Dorsolateral prefrontal cortex (tissue), 120 donors: ENCODE measurements at regions of chr10 and their contacts with region 1.

Region 1: DNA sequence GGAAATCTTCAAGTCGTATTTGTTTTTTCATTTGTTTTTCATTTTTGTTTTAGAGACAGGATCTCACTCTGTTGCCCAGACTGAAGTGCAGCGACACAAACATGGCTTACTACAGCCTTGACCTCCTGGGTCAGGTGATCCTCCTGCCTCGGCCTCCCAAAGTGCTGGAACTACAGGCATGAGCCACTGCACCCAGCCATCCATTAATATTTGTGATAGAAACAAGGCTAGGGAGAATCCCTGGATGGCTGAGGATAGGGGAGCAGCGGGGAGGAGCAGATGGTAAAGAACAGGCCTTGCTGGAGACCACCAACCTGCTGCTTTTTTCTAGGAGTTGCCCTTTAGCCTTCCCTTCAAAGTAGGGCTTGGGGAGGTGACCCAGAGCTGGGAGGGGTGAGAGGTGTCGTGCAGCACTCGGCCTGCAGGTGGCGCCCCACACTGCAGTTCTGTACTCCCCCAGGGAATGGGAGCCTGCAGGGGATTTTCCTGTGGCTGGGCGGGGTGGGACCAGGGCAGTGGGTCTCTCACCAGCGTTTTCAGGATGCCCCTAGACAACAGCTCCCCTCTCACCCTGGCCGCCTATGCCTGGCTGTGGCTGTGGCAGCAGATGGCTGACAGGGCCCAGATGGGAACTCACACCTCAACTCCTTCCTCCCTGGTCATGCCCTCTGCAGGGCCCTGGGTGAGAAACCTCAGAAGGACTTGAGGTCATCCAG is 12.6 kb upstream of the CDH23 start:
- DNase-seq: peak; percentile 65 to 88 (median 81)
- H3K4me3 ChIP-seq: no peak overlapping the region
- H3K27ac ChIP-seq: peak overlapping the region in 1 of 59 donors; percentile 49
- H3K27me3 ChIP-seq: no peaks in the 10 kb centered on the region
- CTCF ChIP-seq: peak; percentile 73 to 98 (median 94)

Region 2: DNA sequence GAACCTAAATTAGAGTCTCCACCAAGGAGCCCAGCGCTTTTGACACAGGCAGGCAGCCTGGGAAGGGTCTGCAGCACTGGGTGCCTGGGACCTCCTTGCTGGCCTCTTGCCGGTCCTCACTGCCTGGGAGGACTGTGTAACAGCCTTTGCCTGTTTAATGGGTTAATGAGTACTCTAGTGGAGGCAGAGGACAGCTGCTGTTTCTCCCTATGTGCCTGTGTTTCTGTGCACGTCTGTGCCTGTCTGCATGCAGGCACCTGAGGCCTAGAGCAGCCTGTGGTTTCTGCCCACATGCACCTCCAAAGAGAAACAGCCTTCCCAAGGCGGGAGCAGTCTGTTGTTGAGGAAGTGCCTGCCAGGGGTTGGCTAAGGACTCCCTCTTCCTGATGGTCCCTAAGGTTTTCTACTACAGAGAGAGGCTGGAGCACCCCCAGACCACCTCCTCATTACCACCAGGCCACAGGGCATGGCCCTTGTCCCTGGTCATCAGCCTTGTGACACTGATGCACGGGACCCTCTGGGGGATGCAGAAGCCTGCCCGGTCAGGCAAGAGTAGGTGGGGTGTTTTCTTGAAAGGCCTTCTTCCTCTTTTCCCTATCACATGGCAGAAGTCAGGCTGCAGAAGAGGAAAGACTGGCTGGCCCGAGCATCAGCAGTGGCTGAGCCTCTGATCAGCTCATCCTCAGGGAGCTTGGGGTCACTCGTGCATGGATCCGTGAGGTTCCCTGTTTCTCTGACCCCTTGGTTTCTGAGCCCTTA is 50.8 kb before region 1 on chr10:
- intact Hi-C with region 1: no loop called
- DNase-seq: no peak
- H3K4me3 ChIP-seq: no peak overlapping the region
- H3K27ac ChIP-seq: peak overlapping the region in 1 of 59 donors; percentile 46
- H3K27me3 ChIP-seq: no peaks in the 10 kb centered on the region
- CTCF ChIP-seq: no peak

Region 3: DNA sequence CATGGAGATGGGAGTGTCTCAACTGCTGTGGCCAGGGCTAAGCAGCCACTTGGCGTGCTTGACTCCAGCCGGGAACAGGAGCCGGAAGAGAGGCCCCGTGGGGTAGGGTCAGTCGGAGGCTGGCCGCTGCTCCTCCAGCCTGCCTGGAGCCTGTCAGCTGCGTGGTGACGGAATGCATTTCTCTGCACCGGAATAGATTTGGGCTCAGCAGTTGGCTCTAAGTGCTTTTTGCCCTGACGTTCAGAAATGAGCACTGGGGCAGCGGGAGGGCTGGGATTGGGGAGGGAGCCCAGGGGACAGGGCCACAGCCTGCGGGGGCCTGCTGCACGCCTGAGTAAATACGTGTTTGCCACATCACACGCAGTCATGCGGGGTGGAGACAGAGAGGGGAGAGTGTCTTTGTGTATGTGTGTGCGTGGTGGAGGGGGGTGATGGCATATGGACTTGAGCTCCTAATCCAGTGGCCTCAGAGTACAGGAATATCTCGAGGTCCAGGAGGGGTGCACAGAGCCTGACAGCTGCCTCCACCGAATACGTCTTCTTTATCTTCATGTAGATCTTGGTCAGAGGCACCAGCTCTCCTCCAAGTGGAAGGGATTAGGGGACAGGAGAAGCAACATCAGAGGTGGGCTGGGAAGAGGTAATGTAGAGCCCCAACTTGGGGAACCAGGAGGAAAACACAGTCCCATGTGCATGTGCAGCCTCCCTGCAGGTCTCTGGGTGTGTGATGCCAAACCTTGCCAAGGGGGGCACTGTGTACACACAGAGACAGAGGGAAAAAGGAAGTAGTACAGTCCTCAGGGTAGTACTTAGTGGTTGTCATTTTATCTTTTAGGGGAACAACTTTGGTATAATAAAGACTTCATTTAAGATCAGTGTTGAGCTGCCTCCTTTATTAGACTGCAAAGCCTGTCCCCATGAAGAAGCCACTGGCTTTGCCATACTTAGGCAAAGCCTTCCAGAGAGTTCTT is 164.0 kb after region 1 on chr10:
- intact Hi-C with region 1: no loop called
- DNase-seq: no peak
- H3K4me3 ChIP-seq: no peak overlapping the region
- H3K27ac ChIP-seq: peak overlapping the region in 1 of 59 donors; percentile 13
- H3K27me3 ChIP-seq: no peaks in the 10 kb centered on the region
- CTCF ChIP-seq: peak in 6 of 56 donors; percentile 8 to 17 (median 12)

Region 4: GRCh38 chr10:71569775-71570588 is 185.9 kb after region 1 on chr10:
- intact Hi-C with region 1: loop called (anchors 5 kb)
- DNase-seq: peak in 9 of 10 donors; percentile 52 to 83 (median 74)
- H3K4me3 ChIP-seq: no peak overlapping the region
- H3K27ac ChIP-seq: peak overlapping the region in 1 of 59 donors; percentile 18
- H3K27me3 ChIP-seq: no peaks in the 10 kb centered on the region
- CTCF ChIP-seq: peak; percentile 75 to 94 (median 87)

Region 5: DNA sequence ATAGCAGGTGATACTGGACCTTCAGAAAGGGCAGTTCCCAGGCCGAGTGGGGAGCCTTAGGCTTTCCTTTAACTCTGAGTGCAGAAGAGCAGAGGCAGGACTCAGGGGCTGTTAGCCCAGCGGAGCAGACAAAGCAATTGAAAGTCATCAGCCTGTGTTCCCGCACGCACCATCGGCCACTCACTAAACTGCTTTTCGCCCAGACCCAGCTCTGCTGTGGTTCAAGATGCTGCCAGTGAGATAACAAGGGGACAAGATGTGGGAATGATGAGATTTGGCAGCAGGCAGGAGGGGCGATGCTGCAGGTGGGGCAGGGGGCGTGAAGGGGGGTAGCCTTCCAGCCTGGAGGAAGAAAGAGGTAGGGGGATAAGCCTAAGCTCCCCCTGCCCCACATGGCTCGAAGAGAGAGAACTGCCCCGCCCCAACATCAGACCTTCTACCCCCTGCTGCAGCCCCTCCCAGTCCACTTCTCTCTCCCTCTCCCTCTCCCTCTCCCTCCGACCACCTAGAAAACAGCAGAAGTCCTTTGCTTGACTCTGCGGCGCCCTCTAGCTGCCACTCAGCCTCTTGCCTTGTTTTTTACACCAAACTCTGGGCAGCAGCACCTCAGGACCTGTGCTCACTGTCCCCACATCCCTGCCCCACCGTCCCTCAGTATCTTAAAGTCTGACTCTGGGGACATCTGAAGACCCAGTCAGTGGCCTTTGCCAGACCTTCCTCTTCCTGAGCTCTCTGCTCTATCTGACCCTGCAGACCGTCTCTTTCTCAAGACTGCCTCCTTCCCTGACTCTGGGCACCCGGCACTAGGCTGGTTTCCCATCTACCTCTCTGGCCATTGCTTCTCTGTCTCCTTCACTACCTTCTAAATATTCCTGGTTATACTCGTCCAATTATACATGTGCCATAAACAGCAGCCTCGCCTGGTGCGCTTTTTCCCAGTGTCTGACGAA is 225.0 kb after region 1 on chr10:
- intact Hi-C with region 1: loop called (anchors 2 to 5 kb)
- DNase-seq: peak; percentile 82 to 94 (median 86)
- H3K4me3 ChIP-seq: peak overlapping the region in 1 of 59 donors; percentile 0
- H3K27ac ChIP-seq: peak overlapping the region in 5 of 59 donors; percentile 3 to 75 (median 32)
- H3K27me3 ChIP-seq: no peaks in the 10 kb centered on the region
- CTCF ChIP-seq: peak; percentile 57 to 90 (median 82)

Region 6: DNA sequence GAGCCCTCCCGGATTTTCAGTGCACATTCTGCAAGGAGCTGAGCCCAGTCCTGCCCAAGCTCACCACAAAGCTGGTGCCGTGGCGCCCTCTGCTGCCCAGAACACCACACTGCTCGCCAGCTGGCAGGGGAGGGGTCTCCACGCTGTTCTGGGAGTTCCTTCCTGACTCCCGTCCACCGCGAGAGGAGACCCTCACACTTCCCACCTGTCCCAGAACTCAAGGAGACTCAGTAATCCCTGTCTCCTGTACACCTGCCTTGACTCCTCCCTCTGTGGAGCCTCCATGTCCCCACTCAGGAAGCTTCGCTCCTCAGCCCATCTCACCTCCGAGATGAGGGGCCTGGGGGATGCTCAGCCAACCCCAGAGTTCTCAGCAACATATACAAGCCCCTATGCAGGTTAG is 324.2 kb after region 1 on chr10:
- intact Hi-C with region 1: loop called in 1 of 2 experiments (anchors 1 kb)
- DNase-seq: peak; percentile 41 to 79 (median 63)
- H3K4me3 ChIP-seq: no peak overlapping the region
- H3K27ac ChIP-seq: peak overlapping the region in 1 of 59 donors; percentile 31
- H3K27me3 ChIP-seq: no peaks in the 10 kb centered on the region
- CTCF ChIP-seq: peak; percentile 55 to 95 (median 87)

Region 7: DNA sequence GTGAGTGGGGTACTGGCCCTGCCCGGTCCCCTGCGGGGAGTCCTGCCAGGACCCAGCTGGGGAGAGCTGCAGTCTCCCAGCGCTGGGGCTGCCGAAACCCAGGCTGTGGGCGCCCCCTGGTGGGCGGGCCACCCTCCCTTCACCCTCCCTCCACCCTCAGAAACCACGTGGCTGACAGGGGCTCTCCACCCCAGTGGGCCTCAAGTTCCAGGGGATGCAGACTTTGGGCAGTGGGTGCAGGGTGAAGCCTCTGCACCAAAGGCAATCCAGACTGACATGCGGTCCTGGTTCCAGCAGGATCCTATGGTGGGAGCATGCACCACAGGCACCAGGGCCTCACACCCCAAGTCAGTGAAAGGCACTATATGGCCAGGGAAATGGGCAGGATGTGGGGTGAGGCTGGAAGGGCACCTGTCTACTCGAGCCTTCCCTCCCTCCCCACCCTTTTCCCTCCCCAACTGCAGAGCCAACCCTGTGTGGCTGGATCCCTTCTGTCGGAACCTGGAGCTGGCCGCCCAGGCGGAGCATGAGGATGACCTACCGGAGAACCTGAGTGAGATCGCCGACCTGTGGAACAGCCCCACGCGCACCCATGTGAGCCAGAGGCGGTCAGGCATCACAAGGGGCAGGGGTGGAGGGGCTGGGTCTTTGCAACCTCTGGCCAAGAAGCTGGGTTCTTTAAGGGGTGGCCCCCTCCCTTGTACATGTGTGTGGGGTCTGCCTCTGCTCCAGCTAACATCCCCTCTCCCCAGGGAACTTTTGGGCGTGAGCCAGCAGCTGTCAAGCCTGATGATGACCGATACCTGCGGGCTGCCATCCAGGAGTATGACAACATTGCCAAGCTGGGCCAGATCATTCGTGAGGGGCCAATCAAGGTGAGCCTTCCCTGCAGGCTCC is 428.1 kb after region 1 on chr10:
- intact Hi-C with region 1: loop called (anchors 5 to 10 kb)
- DNase-seq: peak in 9 of 10 donors; percentile 56 to 83 (median 72)
- H3K4me3 ChIP-seq: no peak overlapping the region
- H3K27ac ChIP-seq: peak overlapping the region in 29 of 59 donors; percentile 6 to 87 (median 45)
- H3K27me3 ChIP-seq: no peaks in the 10 kb centered on the region
- CTCF ChIP-seq: peak; percentile 48 to 91 (median 80)

Region 8: DNA sequence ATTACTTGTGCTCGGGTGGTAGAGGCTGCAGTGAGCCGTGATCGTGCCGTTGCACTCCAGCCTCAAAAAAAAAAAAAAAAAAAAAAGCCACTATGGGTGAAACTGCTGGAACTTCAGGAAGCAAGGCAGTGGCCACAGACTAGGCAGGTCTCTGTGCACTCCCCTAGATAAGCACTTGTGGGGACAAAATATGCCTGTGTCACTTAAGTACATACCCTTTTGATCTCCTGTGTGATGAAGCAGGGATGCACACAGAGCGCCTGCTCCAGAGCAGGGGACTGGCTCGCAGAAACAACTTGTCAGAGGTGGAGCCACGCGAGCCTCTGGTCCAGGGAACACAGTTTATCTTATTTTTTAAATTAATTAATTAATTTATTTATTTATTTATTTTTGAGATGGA is 509.8 kb after region 1 on chr10:
- intact Hi-C with region 1: loop called in 1 of 2 experiments (anchors 5 kb)
- DNase-seq: no peak
- H3K4me3 ChIP-seq: no peak overlapping the region
- H3K27ac ChIP-seq: no peak overlapping the region
- H3K27me3 ChIP-seq: no peaks in the 10 kb centered on the region
- CTCF ChIP-seq: no peak

Region 9: GRCh38 chr10:72058989-72059842 is 675.1 kb after region 1 on chr10:
- intact Hi-C with region 1: loop called in 1 of 2 experiments (anchors 10 kb)
- DNase-seq: peak in 1 of 10 donors; percentile 49
- H3K4me3 ChIP-seq: no peak overlapping the region
- H3K27ac ChIP-seq: peak overlapping the region in 3 of 59 donors; percentile 12 to 44 (median 27)
- H3K27me3 ChIP-seq: no peaks in the 10 kb centered on the region
- CTCF ChIP-seq: no peak